Endothelial cell of umbilical vein (primary cell): ENCODE measurements at regions of chr11 and their contacts with region 1.

Region 1: DNA sequence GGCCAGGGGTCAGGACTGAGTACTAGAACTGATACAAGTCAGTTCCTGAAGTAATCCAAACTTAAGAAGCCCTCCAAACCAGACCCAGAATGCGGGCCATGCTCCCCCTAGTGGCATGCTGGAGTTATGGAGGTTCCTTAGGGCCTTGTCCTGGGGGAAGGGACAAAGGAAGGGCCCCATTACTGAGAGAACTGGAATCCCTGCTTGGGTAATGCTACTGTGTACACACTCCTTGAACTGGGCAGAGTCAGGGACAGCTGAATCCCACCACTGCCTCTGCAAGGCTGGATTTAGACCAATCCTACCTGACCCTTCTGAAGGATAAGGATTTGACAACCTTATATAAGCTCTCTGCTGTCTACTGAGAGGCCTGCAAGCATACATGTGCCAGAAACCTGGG is 97.3 kb upstream of the AKIP1 start:
- DNase-seq: peak; percentile 81
- H3K4me3 ChIP-seq: no peak overlapping the region
- H3K27ac ChIP-seq: peak overlapping the region; percentile 37
- H3K4me1 ChIP-seq: peaks cover 15% of the 10 kb centered on the region
- H3K27me3 ChIP-seq: no peaks in the 10 kb centered on the region
- CTCF ChIP-seq: peak; percentile 90 to 96
- POLR2A ChIP-seq: no peak

Region 2: DNA sequence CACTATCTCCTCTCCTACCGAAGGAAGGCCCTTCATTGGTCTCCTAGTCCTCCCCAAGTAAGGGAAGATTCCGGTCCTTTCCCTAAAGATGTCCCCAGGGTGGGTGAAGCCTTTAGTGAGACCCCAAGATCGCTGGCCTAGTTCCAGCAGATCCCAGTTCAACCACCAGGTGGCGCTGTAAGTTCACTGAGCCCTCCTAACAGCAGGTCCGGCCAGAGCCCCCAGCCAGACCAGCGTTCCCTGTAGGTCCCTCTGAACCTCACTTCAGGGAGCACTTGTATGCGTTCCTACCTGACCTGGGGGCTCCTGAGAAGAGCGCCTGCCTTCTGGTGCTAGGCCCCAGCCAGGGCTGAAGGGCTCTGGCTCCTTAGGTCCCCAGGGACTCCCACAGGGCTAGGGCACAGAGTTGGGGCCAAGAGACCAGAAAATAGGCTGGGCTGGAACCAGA is 588.0 kb before region 1 on chr11:
- CTCF ChIA-PET with region 1: no interaction called
- POLR2A ChIA-PET with region 1: no interaction called
- dilution Hi-C with region 1: no loop called
- intact Hi-C with region 1: loop called (anchors 2 kb)
- DNase-seq: peak; percentile 68
- H3K4me3 ChIP-seq: no peak overlapping the region
- H3K27ac ChIP-seq: no peak overlapping the region
- H3K4me1 ChIP-seq: no peaks in the 10 kb centered on the region
- H3K27me3 ChIP-seq: peaks cover 0 to 3% of the 10 kb centered on the region in 2 experiments
- CTCF ChIP-seq: peak; percentile 84 to 90
- POLR2A ChIP-seq: no peak

Region 3: DNA sequence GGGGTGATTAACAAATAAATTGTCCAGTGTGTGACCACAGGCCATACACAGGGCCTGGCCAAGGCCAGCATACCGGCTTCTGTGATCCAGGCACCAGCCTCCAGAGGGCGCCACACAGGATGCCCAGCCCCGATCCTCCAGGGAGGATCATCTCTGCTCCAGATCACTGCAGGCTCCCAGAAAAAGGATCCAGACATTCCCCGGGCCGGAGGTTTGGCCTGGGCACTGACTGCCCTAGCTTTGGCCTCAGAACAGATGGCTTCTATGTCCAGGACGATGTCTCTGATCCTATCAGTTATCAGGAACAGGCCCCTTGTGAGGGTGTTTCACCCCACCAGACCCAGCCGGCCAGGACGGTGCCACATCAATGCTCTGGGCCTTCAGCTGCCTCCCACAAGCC is 475.5 kb before region 1 on chr11:
- CTCF ChIA-PET with region 1: no interaction called
- POLR2A ChIA-PET with region 1: no interaction called
- dilution Hi-C with region 1: no loop called
- intact Hi-C with region 1: loop called (anchors 1 kb)
- DNase-seq: peak; percentile 29
- H3K4me3 ChIP-seq: no peak overlapping the region
- H3K27ac ChIP-seq: no peak overlapping the region
- H3K4me1 ChIP-seq: no peaks in the 10 kb centered on the region
- H3K27me3 ChIP-seq: no peaks in the 10 kb centered on the region
- CTCF ChIP-seq: peak; percentile 69 to 85
- POLR2A ChIP-seq: no peak

Region 4: DNA sequence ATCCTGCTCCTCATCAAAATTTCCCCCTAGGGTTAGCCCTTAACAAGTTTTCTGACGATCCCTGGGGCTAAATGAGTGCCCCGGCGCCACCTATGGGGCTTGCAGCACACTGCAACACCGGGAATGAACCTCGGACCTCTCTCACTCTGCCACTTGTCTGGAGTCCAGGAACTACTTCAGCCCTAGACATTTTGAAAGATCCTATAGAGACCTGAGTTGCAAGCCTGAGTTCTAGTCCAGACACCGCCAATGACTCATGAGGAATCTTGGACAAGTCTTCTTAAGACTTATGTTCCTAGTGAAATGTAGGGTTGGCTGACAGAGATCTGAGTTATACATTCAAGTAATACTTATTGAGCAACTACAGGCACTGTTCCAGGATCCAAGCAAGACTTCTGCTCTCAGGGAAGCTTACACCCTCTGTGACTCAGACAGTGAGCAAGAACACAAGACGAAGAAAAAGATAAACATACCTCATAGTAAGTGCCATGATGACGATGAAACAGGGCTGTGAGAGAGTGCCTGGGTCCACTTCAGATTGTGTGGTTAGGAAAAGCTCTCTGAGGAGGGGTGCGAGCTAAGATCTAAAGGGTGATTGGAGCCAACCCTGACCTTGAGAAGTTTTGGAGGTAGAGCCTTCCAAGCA is 209.5 kb before region 1 on chr11:
- CTCF ChIA-PET with region 1: interaction called, 5 read pairs
- POLR2A ChIA-PET with region 1: no interaction called
- dilution Hi-C with region 1: no loop called
- intact Hi-C with region 1: loop called (anchors 1 kb)
- DNase-seq: peak; percentile 53
- H3K4me3 ChIP-seq: no peak overlapping the region
- H3K27ac ChIP-seq: no peak overlapping the region
- H3K4me1 ChIP-seq: no peaks in the 10 kb centered on the region
- H3K27me3 ChIP-seq: peaks cover 0 to 1% of the 10 kb centered on the region in 2 experiments
- CTCF ChIP-seq: peak; percentile 67 to 72
- POLR2A ChIP-seq: no peak

Region 5: GRCh38 chr11:8682303-8683114 is 131.1 kb before region 1 on chr11 and contains the starts of genes RPL27A and TRIM66:
- CTCF ChIA-PET with region 1: interaction called, 11 read pairs
- POLR2A ChIA-PET with region 1: no interaction called
- dilution Hi-C with region 1: no loop called
- intact Hi-C with region 1: no loop called
- DNase-seq: peak; percentile 97
- H3K4me3 ChIP-seq: peak within 1 kb of the TSS; percentile 58 to 92 (median 88)
- H3K27ac ChIP-seq: peak within 1 kb of the TSS; percentile 86
- H3K4me1 ChIP-seq: peaks cover 30% of the 10 kb centered on the region
- H3K27me3 ChIP-seq: no peaks in the 10 kb centered on the region
- CTCF ChIP-seq: peak in 1 of 2 donors; percentile 7
- POLR2A ChIP-seq: peak; percentile 100
- total RNA-seq, gene RPL27A: 952 and 1,303 TPM in 2 replicates
- total RNA-seq, gene TRIM66: 8.6 and 11.7 TPM in 2 replicates

Region 6: DNA sequence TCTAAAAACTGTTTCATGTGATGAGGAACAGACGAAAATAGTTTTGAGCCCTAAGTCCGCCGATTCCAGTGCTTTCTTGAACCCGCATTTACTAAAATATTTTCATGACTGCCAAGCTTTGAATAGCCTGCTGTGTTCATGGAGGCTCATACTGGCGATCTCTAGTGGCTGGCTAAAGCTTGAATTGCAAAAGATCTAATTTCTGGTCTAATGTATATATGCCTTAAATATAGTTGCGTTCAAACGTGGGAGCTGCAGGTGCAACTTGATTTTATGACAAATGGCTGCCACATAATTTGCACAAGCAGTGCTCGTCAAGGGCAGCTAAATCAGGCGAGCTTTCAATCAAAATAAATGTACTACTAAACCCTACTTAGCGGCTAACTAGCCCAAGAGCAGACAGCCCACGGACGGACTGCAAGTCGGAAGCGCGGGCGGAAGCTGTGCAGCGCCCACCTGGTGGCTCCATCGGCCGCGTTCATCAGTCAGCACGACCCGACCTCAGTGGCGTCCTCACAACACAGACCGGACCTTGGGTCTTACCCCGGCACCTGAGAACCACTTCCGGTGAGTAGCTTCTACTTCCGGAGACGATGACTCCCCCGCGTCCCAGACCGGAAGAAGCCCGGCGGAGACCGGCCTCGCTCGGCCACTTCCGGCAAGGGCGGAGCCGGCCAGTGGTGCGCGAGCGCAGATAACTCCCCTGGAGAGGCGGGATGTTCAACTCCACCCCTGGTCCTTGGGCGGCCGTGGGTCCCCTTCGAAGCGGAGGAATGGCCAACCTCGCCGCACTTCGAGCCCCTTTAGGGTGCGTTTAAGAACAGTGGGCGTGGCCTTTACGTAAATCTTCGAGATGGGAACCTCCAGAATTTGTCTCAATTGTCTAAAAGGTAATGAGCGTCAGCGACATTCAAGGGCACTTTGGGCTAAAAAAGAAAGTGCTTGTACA is 125.0 kb before region 1 on chr11:
- CTCF ChIA-PET with region 1: interaction called, 12 read pairs
- POLR2A ChIA-PET with region 1: no interaction called
- dilution Hi-C with region 1: no loop called
- intact Hi-C with region 1: loop called (anchors 1 kb)
- DNase-seq: peak; percentile 93
- H3K4me3 ChIP-seq: peak overlapping the region; percentile 45 to 86 (median 53)
- H3K27ac ChIP-seq: peak overlapping the region; percentile 65
- H3K4me1 ChIP-seq: peaks cover 46% of the 10 kb centered on the region
- H3K27me3 ChIP-seq: no peaks in the 10 kb centered on the region
- CTCF ChIP-seq: no peak
- POLR2A ChIP-seq: peak; percentile 99

Region 7: DNA sequence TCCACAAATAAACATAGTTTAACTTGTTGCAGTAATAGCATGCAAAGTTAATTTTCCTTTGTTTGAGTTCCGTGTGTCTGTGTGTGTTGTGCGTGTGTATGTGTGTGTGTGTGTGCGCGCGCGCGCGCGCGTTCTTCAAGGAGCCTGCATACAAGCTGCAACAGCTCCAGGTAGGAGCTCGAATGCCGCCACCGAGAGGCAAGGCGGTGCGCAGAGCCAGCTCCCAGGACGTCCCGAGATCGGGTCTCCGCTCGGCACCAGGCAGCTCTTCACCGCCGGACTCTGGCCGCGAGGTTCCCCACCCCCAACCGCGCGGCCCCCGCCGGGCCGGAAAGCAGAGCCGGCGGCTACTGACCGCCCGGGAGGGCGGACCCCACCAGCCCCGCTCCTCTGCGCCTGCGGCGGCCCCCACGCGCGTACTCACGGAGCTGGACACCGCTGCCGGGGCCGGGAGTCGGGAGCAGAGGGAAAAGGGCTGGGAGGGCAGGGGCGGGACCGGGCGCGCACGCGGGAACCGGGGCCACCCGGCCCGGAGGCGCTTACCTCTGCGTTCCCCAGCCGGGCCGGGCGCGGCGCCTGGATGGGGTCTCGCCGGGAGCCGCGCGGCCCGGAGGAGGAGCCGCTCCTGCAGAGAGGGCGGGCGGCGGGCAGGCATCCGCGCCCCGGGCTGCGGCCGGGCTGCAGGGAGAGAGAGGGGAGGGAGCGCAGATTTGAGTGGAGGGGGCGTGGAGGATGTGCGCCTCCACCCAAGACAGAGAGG is 56.9 kb after region 1 on chr11:
- CTCF ChIA-PET with region 1: interaction called, 4 read pairs
- POLR2A ChIA-PET with region 1: no interaction called
- dilution Hi-C with region 1: no loop called
- intact Hi-C with region 1: loop called (anchors 2 kb)
- DNase-seq: peak; percentile 68
- H3K4me3 ChIP-seq: peak overlapping the region; percentile 6 to 50 (median 39)
- H3K27ac ChIP-seq: no peak overlapping the region
- H3K4me1 ChIP-seq: peaks cover 20% of the 10 kb centered on the region
- H3K27me3 ChIP-seq: no peaks in the 10 kb centered on the region
- CTCF ChIP-seq: no peak
- POLR2A ChIP-seq: no peak

Region 8: DNA sequence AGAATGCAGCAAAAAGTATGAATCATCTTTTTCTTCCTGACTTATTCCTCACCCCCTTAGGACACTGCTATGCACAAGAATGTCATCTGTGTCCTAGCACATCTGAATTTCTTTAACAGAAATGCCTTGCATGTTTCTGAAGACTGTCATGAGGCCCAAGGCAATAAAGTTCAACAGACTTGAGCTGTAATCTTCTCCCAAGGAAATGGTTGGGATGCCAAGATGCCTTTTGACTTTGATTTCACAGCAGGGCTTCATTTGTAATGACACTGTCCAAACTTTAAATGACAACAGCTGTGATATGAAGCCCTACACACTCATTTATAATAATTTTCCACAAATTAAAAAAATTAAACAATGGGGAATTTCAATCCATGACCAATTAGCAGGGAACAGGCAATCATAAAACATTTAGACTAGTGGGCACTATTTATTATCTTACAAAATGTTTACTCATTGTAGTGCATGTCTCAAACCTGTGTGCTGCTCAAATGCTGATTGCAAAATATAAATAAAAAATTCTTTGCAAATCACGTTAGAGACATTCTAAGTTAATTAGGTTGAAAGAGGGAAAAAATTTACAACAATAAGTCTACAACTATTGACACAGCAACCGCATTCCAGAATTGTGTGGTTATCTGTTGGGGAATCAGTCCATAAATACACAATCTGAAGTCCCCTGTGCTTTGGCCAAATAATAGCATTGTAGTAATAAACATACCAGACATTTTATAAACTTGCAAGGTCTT is 1092.6 kb after region 1 on chr11:
- CTCF ChIA-PET with region 1: no interaction called
- POLR2A ChIA-PET with region 1: no interaction called
- dilution Hi-C with region 1: no loop called
- intact Hi-C with region 1: no loop called
- DNase-seq: peak; percentile 71
- H3K4me3 ChIP-seq: no peak overlapping the region
- H3K27ac ChIP-seq: peak overlapping the region; percentile 86
- H3K4me1 ChIP-seq: peaks cover 30% of the 10 kb centered on the region
- H3K27me3 ChIP-seq: no peaks in the 10 kb centered on the region
- CTCF ChIP-seq: no peak
- POLR2A ChIP-seq: no peak